ENCODE measurements at regions of chr2 and their contacts with region 1.

Region 1: DNA sequence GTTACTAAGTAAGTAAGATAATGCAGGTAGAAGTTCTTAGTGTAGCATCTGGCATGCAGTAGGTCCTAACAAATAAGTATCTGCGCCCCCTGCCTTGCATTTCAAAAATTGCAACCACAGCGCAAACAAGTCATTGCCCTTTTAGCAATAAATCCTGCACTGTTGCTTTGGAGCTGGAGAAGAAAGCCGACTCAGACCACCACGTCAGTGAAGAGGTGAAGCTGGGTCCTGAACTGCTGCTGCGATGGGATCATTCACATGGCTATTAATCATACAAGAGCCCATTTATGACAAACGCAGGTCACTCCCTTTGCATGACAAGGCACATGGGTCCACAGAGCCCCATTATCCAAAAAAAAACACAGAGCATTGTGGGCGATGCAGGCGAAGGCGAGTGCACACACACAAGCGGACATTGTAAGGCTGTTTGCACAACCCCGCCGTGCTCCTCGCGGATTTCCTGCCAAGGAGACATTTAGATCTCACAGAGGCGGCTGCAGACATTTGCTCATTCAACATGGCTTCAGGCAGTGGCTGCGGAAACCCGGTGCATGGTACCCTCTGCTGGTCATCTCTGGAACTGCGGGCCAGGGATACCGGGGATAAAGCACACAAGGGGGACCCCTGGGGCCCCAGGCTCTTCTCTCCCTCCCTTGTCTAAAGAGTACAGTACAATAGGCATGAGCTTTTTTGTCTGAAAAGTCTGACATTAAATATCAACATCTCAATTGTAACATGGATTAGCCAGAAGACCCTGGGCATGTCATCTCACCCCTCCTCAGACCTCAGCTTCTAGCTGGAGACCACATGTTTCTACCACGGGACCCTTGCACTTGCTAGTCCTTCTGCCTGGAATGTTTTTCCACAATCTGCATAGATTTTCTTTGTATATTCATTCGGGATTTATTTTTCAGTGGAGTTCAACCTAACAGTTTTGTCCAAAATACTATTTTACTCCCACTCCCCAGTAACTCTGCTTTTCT is 56.7 kb downstream of the CYRIA start:
- DNase-seq: peak; percentile 60 to 99
- H3K4me3 ChIP-seq: peak overlapping the region; percentile 38 to 78 (median 66); a peak in 7 of 8 replicates
- H3K27ac ChIP-seq: no peak overlapping the region
- H3K4me1 ChIP-seq: no peaks in the 10 kb centered on the region; a peak in 1 of 7 replicates
- H3K27me3 ChIP-seq: no peaks in the 10 kb centered on the region
- CTCF ChIP-seq: peak; percentile 91 to 93 (median 91)
- EP300 ChIP-seq: no peak
- POLR2A ChIP-seq: no peak; a peak in 1 of 3 replicates
- RAD21 ChIP-seq: peak; percentile 93 to 95

Region 2: GRCh38 chr2:16303273-16303577 is 305.7 kb before region 1 on chr2:
- CTCF ChIA-PET with region 1: no interaction called
- POLR2A ChIA-PET with region 1: no interaction called
- DNase-seq: peak in 1 of 2 experiments; percentile 45
- H3K4me3 ChIP-seq: peak overlapping the region in 1 of 4 experiments; percentile 3; a peak in 1 of 8 replicates
- H3K27ac ChIP-seq: no peak overlapping the region
- H3K4me1 ChIP-seq: peaks cover 4 to 12% (median 11%) of the 10 kb centered on the region in 4 experiments; a peak in 5 of 7 replicates
- H3K27me3 ChIP-seq: no peaks in the 10 kb centered on the region; a peak in 1 of 7 replicates
- CTCF ChIP-seq: no peak
- EP300 ChIP-seq: no peak
- POLR2A ChIP-seq: no peak
- RAD21 ChIP-seq: no peak

Region 3: GRCh38 chr2:16496426-16497388 is 112.2 kb before region 1 on chr2:
- CTCF ChIA-PET with region 1: interaction called, 11 read pairs
- POLR2A ChIA-PET with region 1: no interaction called
- DNase-seq: no peak
- H3K4me3 ChIP-seq: no peak overlapping the region
- H3K27ac ChIP-seq: no peak overlapping the region
- H3K4me1 ChIP-seq: no peaks in the 10 kb centered on the region
- H3K27me3 ChIP-seq: no peaks in the 10 kb centered on the region
- CTCF ChIP-seq: no peak
- EP300 ChIP-seq: no peak
- POLR2A ChIP-seq: no peak
- RAD21 ChIP-seq: no peak

Region 4: DNA sequence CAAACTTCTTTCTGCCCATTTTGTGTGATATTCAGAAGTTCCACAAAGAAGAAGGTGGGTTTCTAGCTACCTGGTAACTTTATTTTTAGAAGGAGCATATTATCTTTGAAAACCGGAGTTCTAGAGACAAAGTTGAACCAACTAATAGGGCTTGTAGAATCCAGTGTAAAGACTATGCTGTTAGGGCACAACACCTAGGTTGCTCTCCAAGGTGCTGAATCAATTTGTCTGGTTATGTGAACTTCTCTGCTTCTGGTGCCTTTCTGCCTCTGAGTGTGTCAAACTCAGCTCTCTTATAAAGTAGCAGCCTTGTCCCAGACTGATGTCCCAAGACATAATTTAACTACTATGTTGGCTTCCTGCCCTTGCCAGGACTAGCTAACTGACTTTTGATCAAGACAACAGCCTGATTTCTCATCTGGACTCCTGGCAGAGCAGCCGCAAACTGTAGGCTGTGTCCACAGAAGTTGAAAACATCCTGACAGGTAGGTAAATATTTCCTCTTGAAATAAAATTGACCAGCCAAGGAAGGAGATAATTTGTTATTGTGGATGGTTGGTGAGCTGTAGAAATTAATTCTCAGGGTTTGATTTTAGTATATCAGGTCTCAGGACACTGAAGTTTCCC is 62.7 kb before region 1 on chr2:
- CTCF ChIA-PET with region 1: interaction called, 91 read pairs
- POLR2A ChIA-PET with region 1: no interaction called
- DNase-seq: no peak
- H3K4me3 ChIP-seq: no peak overlapping the region
- H3K27ac ChIP-seq: no peak overlapping the region
- H3K4me1 ChIP-seq: no peaks in the 10 kb centered on the region
- H3K27me3 ChIP-seq: no peaks in the 10 kb centered on the region
- CTCF ChIP-seq: no peak
- EP300 ChIP-seq: no peak
- POLR2A ChIP-seq: no peak
- RAD21 ChIP-seq: no peak

Region 5: DNA sequence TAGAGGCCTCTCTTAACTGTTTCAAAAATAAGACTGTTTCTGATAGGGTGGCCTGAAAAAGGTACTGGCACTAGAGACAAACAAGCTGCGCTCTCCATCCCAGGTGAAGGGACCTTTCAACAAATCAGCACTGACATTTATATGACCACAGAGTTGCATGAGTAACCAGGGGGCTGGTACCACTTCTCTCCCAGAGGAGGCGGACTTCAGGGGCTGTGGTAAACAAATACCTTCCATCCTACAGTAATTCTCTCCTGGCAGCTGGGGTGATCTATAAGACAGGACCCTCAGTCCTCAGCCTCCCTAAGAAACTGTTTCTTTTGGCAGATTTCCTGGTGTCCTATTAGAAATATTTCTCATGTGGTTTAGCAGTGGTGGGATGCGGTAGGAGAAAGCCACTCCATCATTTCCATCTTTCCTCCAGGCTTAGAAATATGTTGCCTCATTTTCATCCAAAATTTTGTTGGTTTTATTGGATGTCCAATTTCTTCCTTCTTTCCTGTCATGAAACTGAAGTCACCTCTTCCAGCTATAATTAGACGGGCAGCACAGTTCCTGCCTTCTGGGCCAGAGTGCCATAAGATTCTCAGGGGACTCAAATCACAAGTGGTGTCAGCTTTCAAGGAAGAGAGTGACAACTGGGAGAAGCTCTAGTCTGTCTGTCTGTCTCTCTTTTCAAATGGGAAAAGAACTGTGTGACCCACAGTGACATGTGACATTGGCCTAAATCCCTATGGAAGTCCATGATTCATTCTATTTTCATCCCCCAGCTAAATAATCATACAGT is 39.8 kb before region 1 on chr2:
- CTCF ChIA-PET with region 1: interaction called, 11 read pairs
- POLR2A ChIA-PET with region 1: no interaction called
- DNase-seq: no peak
- H3K4me3 ChIP-seq: no peak overlapping the region
- H3K27ac ChIP-seq: no peak overlapping the region
- H3K4me1 ChIP-seq: no peaks in the 10 kb centered on the region
- H3K27me3 ChIP-seq: no peaks in the 10 kb centered on the region
- CTCF ChIP-seq: no peak
- EP300 ChIP-seq: no peak
- POLR2A ChIP-seq: no peak
- RAD21 ChIP-seq: no peak; a peak in 1 of 4 replicates

Region 6: GRCh38 chr2:16656784-16657391 is 47.9 kb after region 1 on chr2:
- CTCF ChIA-PET with region 1: interaction called, 16 read pairs
- POLR2A ChIA-PET with region 1: interaction called, 3 read pairs
- DNase-seq: no peak
- H3K4me3 ChIP-seq: no peak overlapping the region
- H3K27ac ChIP-seq: no peak overlapping the region
- H3K4me1 ChIP-seq: peaks cover 0 to 3% (median 0%) of the 10 kb centered on the region in 4 experiments; a peak in 3 of 7 replicates
- H3K27me3 ChIP-seq: no peaks in the 10 kb centered on the region
- CTCF ChIP-seq: no peak
- EP300 ChIP-seq: no peak
- POLR2A ChIP-seq: no peak
- RAD21 ChIP-seq: no peak

Region 7: GRCh38 chr2:16756831-16757644 is 148.1 kb after region 1 on chr2:
- CTCF ChIA-PET with region 1: interaction called, 161 read pairs
- POLR2A ChIA-PET with region 1: no interaction called
- DNase-seq: peak; percentile 59 to 84
- H3K4me3 ChIP-seq: no peak overlapping the region
- H3K27ac ChIP-seq: no peak overlapping the region
- H3K4me1 ChIP-seq: no peaks in the 10 kb centered on the region
- H3K27me3 ChIP-seq: no peaks in the 10 kb centered on the region
- CTCF ChIP-seq: peak; percentile 78 to 95 (median 88)
- EP300 ChIP-seq: no peak
- POLR2A ChIP-seq: no peak
- RAD21 ChIP-seq: peak; percentile 97 to 99

Region 8: GRCh38 chr2:16824472-16824871 is 215.5 kb after region 1 on chr2:
- CTCF ChIA-PET with region 1: no interaction called
- POLR2A ChIA-PET with region 1: no interaction called
- DNase-seq: no peak
- H3K4me3 ChIP-seq: no peak overlapping the region
- H3K27ac ChIP-seq: no peak overlapping the region
- H3K4me1 ChIP-seq: no peaks in the 10 kb centered on the region
- H3K27me3 ChIP-seq: peaks cover 0 to 1% (median 0%) of the 10 kb centered on the region in 4 experiments; a peak in 1 of 7 replicates
- CTCF ChIP-seq: no peak
- EP300 ChIP-seq: no peak
- POLR2A ChIP-seq: no peak
- RAD21 ChIP-seq: no peak

Measured in H1 (cell line).